GM10248 (cell line): ENCODE measurements at regions of chr4 and their contacts with region 1.

Region 1: GRCh38 chr4:98995183-98996055 is at the start of gene METAP1:
- DNase-seq: peak; percentile 96
- CTCF ChIP-seq: peak; percentile 86

Region 2: GRCh38 chr4:98663226-98664006 is 332.0 kb before region 1 on chr4:
- CTCF ChIA-PET with region 1: no interaction called
- POLR2A ChIA-PET with region 1: no interaction called
- DNase-seq: peak; percentile 71
- CTCF ChIP-seq: no peak

Region 3: DNA sequence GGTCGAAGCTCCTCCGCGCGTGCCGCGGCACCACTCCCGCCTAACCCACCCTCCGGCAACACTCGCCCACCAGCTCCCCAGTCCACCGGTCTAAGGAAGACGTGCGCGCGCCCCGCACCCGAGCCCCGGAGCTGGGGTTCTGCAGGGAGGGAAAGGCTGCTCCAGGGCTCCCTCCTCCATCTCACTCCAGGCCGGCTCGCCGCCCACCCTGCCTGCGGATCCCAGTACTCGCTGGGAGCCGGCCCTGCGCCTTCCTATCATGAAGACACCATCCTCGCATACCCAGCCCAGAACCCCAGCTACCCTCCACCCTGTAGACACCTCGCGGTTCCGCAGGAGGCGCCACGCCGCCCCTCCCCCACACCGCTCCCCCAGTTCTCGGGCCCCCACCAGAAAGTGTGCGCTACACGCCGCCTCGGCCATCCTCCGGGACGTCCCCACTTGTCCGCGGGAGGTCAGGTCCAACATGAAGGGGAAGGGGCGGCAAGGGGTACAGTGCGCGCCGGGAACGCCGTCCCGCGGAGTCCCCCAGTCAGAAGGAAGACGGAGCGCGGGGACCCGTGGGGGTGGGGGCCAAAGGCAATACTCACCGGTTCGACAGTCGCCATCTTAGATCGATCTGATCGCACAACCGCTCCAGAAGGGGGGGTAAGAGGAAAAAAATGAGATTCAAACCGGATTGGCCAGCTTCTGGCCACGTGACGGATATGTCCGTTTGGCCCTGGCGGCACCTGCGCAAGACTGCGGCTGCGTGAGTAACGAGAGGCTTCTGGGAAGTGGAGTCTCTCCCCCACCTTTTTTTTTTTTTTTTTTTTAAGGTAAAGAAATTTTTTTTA is 66.7 kb before region 1 on chr4 and contains the start of gene EIF4E:
- CTCF ChIA-PET with region 1: interaction called, 20 read pairs
- POLR2A ChIA-PET with region 1: interaction called, 7 read pairs
- DNase-seq: peak; percentile 94
- CTCF ChIP-seq: no peak

Region 4: DNA sequence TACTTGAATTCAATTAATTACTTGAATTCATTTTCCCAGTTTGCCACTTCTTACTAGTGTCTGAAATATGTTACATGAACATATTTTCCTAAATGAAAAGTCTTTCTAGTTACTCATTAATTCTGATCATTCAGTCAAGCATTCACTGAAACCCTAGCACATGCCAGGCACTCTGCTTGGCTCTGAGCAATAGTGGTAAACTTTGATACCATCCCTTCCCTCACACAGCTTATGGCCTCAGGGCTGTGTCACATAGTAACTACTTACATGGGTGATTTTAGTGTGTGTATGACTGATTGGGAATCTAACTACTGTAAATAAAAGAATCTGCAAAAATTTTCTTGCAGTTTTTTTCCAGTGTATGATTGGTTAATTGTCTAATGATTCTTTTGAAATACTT is 32.8 kb after region 1 on chr4:
- CTCF ChIA-PET with region 1: interaction called, 17 read pairs
- POLR2A ChIA-PET with region 1: no interaction called
- DNase-seq: no peak
- CTCF ChIP-seq: no peak

Region 5: GRCh38 chr4:99088481-99089365 is 93.3 kb after region 1 on chr4 and contains the start of gene ADH5:
- CTCF ChIA-PET with region 1: interaction called, 11 read pairs
- POLR2A ChIA-PET with region 1: no interaction called
- DNase-seq: peak; percentile 95
- CTCF ChIP-seq: no peak

Region 6: GRCh38 chr4:99100876-99101275 is 105.5 kb after region 1 on chr4:
- CTCF ChIA-PET with region 1: no interaction called
- POLR2A ChIA-PET with region 1: no interaction called
- DNase-seq: no peak
- CTCF ChIP-seq: no peak